ENCODE measurements at regions of chr11 and their contacts with region 1.

Region 1: DNA sequence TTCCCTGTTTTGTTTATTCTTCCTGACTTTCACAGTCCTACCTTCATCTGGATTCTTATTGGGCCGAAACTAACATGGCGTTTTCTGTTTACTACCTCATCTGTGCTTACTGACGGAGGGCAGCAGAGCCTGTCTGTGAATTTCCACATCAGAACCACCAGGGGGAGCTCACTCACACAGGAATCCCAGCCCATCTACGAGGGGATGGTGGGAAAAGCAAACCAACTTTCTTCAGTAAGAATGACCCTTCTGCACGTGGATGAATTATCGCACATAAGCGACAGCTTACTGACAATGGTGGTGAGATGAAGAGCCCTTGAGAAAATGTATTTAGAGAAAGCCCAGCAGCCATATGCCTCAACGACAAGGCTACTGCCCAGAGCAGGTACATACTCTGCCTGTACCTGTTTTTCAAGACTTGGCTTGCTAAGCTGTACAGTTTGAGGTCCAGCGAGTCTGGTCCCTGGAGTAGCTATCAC is 42.5 kb downstream of the LARGE2 start:
- DNase-seq: peak; percentile 65 to 75
- ATAC-seq: peak; percentile 97 to 99
- H3K4me3 ChIP-seq: no peak overlapping the region
- H3K27ac ChIP-seq: no peak overlapping the region
- H3K4me1 ChIP-seq: no peaks in the 10 kb centered on the region
- CTCF ChIP-seq: peak; percentile 92
- EP300 ChIP-seq: no peak
- POLR2A ChIP-seq: no peak
- RAD21 ChIP-seq: peak; percentile 61 to 73

Region 2: DNA sequence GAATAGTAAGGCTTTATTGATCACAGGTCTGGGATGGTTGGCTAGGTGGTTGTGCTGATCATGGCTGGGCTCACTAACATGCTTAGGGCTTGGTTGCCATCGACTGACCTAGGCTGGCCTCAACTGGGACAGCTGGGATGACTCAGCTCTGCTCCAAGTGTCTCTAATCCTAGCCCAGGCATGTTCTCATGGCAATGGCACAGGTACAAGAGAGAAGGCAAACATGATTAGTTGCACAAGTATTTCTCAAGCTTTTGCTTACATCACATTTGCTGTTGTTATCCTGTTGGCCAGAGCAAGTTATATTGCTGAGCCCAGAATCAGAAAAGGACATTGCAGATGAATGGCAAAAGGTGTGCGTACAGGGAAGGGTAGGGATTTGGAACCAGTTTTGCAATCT is 228.5 kb before region 1 on chr11:
- CTCF ChIA-PET with region 1: no interaction called
- POLR2A ChIA-PET with region 1: no interaction called
- DNase-seq: peak in 1 of 2 experiments; percentile 56
- ATAC-seq: peak; percentile 52 to 85; a peak in 5 of 6 replicates
- H3K4me3 ChIP-seq: no peak overlapping the region
- H3K27ac ChIP-seq: peak overlapping the region; percentile 42 to 53; a peak in 5 of 6 replicates
- H3K4me1 ChIP-seq: peaks cover 8% of the 10 kb centered on the region; the same call in 2 of the 3 replicates
- CTCF ChIP-seq: no peak
- EP300 ChIP-seq: no peak; a peak in 1 of 5 replicates
- POLR2A ChIP-seq: no peak
- RAD21 ChIP-seq: no peak

Region 3: GRCh38 chr11:45872513-45873356 is 92.2 kb before region 1 on chr11:
- CTCF ChIA-PET with region 1: interaction called, 11 read pairs
- POLR2A ChIA-PET with region 1: no interaction called
- DNase-seq: peak; percentile 68 to 71
- ATAC-seq: peak; percentile 86 to 99
- H3K4me3 ChIP-seq: no peak overlapping the region
- H3K27ac ChIP-seq: no peak overlapping the region
- H3K4me1 ChIP-seq: no peaks in the 10 kb centered on the region
- CTCF ChIP-seq: peak; percentile 62
- EP300 ChIP-seq: no peak
- POLR2A ChIP-seq: no peak
- RAD21 ChIP-seq: peak; percentile 72 to 76

Region 4: GRCh38 chr11:45926001-45926401 is 38.9 kb before region 1 on chr11:
- CTCF ChIA-PET with region 1: interaction called, 10 read pairs
- POLR2A ChIA-PET with region 1: no interaction called
- DNase-seq: no peak
- ATAC-seq: no peak; a peak in 1 of 6 replicates
- H3K4me3 ChIP-seq: no peak overlapping the region
- H3K27ac ChIP-seq: no peak overlapping the region
- H3K4me1 ChIP-seq: peaks cover 11% of the 10 kb centered on the region
- CTCF ChIP-seq: no peak
- EP300 ChIP-seq: no peak
- POLR2A ChIP-seq: no peak
- RAD21 ChIP-seq: no peak

Region 5: DNA sequence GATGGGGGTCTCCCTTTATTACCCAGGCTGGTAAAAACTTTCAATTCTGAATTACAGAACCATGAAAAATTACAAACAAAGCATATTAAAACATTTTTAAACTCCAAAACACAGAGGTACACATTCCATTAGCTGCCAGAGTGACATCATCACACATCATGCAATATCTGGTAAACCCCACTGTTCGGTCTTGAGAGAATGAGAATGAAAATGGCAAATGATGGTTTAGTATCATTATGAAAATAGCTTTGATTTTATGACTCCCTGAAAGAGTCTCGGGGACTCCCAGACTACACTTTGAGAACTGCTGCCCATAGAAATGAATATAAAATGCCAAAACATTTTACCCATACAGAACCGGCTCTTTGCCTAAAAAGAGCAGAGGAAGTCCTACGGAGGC is 23.7 kb before region 1 on chr11:
- CTCF ChIA-PET with region 1: interaction called, 12 read pairs
- POLR2A ChIA-PET with region 1: no interaction called
- DNase-seq: no peak
- ATAC-seq: no peak
- H3K4me3 ChIP-seq: no peak overlapping the region
- H3K27ac ChIP-seq: no peak overlapping the region
- H3K4me1 ChIP-seq: no peaks in the 10 kb centered on the region
- CTCF ChIP-seq: no peak
- EP300 ChIP-seq: no peak
- POLR2A ChIP-seq: no peak
- RAD21 ChIP-seq: no peak

Region 6: DNA sequence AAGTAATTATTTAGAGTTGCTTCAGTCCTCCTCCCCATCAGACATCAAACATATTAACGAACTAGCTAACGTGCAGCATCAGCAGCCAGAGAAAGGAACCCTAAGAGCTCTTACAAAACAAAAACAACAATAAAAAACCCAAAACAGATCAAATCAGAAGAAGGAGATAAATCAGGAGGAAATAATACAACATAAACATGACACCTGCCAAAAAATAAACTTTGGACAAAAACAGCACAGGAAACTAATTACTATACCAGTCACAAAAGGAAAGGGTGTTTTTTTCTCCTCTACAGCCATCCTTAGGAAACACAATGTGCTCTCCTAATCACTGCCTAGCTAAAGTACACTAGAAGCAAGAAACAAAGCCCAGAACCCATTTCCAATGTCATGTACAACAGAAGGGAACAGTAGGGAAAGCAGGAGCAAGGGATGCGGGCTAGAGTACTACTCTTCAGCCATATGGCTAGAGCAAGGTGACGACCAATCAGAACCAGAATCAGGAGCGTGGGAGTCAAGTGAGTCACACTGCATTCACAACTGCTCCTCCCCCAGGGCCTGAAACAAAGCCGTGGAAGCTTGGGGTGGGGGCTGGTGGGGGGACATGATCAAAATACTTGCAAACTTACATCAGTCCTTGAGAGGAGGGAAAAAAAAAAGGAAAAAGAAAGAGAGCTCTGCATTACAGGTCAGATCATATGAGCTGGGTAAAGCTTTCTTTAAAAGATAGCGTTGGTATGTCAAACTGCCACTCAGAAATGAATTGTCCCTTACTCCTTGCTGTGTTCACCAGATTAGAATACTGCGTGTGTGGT is 17.9 kb after region 1 on chr11:
- CTCF ChIA-PET with region 1: interaction called, 21 read pairs
- POLR2A ChIA-PET with region 1: interaction called, 3 read pairs
- DNase-seq: peak in 1 of 2 experiments; percentile 11
- ATAC-seq: peak in 1 of 2 experiments; percentile 53; a peak in 3 of 6 replicates
- H3K4me3 ChIP-seq: no peak overlapping the region
- H3K27ac ChIP-seq: no peak overlapping the region
- H3K4me1 ChIP-seq: peaks cover 7% of the 10 kb centered on the region; the same call in 2 of the 3 replicates
- CTCF ChIP-seq: no peak
- EP300 ChIP-seq: no peak
- POLR2A ChIP-seq: no peak
- RAD21 ChIP-seq: no peak

Region 7: GRCh38 chr11:46001448-46001914 is 36.5 kb after region 1 on chr11:
- CTCF ChIA-PET with region 1: interaction called, 37 read pairs
- POLR2A ChIA-PET with region 1: no interaction called
- DNase-seq: no peak
- ATAC-seq: no peak
- H3K4me3 ChIP-seq: no peak overlapping the region
- H3K27ac ChIP-seq: no peak overlapping the region
- H3K4me1 ChIP-seq: peaks cover 4% of the 10 kb centered on the region; the same call in 1 of the 3 replicates
- CTCF ChIP-seq: no peak
- EP300 ChIP-seq: no peak
- POLR2A ChIP-seq: no peak
- RAD21 ChIP-seq: no peak

Region 8: GRCh38 chr11:46015666-46016340 is 50.9 kb after region 1 on chr11:
- CTCF ChIA-PET with region 1: interaction called, 12 read pairs
- POLR2A ChIA-PET with region 1: no interaction called
- DNase-seq: no peak
- ATAC-seq: no peak
- H3K4me3 ChIP-seq: no peak overlapping the region
- H3K27ac ChIP-seq: no peak overlapping the region
- H3K4me1 ChIP-seq: peaks cover 11% of the 10 kb centered on the region; the same call in 2 of the 3 replicates
- CTCF ChIP-seq: no peak
- EP300 ChIP-seq: no peak
- POLR2A ChIP-seq: no peak
- RAD21 ChIP-seq: no peak

Measured in A549 (cell line).